Body of pancreas (tissue), 4 donors: ENCODE measurements at regions of chr10 and their contacts with region 1.

Region 1: GRCh38 chr10:122639801-122640200 is 59.8 kb downstream of the C10orf120 start:
- DNase-seq: no peak
- ATAC-seq: no peak
- H3K4me3 ChIP-seq: no peak overlapping the region
- H3K27ac ChIP-seq: no peak overlapping the region
- H3K4me1 ChIP-seq: peaks cover 32% of the 10 kb centered on the region
- H3K27me3 ChIP-seq: no peaks in the 10 kb centered on the region
- CTCF ChIP-seq: no peak
- POLR2A ChIP-seq: no peak

Region 2: GRCh38 chr10:122461367-122461728 is 178.5 kb before region 1 on chr10 and contains the start of gene HTRA1:
- intact Hi-C with region 1: no loop called
- DNase-seq: peak; percentile 66 to 80 (median 72)
- ATAC-seq: peak; percentile 77
- H3K4me3 ChIP-seq: peak within 1 kb of the TSS; percentile 33 to 37
- H3K27ac ChIP-seq: peak within 1 kb of the TSS in 2 of 4 donors; percentile 13 to 24
- H3K4me1 ChIP-seq: peaks cover 25% of the 10 kb centered on the region
- H3K27me3 ChIP-seq: no peaks in the 10 kb centered on the region
- CTCF ChIP-seq: no peak
- POLR2A ChIP-seq: peak in 1 of 3 donors; percentile 3
- total RNA-seq, gene HTRA1: 29.3 to 36.6 TPM

Region 3: GRCh38 chr10:122707535-122707934 is 67.7 kb after region 1 on chr10:
- intact Hi-C with region 1: loop called (anchors 5 kb)
- DNase-seq: no peak
- ATAC-seq: no peak
- H3K4me3 ChIP-seq: no peak overlapping the region
- H3K27ac ChIP-seq: no peak overlapping the region
- H3K4me1 ChIP-seq: peaks cover 22% of the 10 kb centered on the region
- H3K27me3 ChIP-seq: no peaks in the 10 kb centered on the region
- CTCF ChIP-seq: no peak
- POLR2A ChIP-seq: no peak